ENCODE measurements at regions of chr15 and their contacts with region 1.

Region 1: DNA sequence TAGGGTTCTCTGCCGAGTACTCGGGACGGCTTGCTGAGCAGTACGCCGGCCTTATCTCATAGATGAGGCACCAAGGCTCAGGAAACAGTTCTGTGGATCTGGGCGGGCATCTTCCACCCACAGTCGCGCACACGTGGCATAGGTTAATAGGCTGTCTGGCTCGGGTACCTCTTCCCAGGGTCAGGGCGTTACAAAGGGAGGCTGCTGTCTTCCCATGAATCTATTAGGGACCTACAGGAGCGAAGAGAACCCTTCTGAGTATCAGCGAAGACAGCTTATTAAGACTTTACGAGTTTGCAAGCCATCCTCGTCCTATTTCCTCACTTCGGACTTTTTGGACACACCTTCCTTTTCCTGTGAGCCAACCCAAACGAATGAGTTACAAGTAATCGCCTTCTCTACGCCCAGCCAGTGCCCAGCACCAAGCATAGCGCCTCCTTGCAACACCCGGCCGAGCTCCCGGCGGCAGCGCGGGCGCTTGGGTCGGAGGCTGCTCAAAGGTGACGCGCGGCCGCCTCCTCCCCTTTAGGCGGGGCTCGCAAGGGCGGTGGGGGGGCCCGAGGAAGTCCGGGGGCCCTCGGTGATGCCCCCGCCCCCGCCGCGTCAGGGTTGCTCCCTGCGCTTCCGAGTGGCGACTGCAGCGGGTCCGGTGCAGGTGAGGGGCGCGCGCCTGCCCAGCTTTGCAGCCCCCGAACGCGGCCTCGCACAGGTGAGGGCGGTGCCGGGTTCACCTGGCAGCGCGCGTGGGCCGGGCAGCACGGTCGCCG is at the start of gene MCTP2:
- DNase-seq: peak; percentile 88
- ATAC-seq: peak; percentile 90
- total RNA-seq, gene MCTP2: 1.2 TPM

Region 2: GRCh38 chr15:93570527-93570926 is 660.6 kb before region 1 on chr15:
- intact Hi-C with region 1: loop called (anchors 10 kb)
- DNase-seq: no peak
- ATAC-seq: no peak

Region 3: DNA sequence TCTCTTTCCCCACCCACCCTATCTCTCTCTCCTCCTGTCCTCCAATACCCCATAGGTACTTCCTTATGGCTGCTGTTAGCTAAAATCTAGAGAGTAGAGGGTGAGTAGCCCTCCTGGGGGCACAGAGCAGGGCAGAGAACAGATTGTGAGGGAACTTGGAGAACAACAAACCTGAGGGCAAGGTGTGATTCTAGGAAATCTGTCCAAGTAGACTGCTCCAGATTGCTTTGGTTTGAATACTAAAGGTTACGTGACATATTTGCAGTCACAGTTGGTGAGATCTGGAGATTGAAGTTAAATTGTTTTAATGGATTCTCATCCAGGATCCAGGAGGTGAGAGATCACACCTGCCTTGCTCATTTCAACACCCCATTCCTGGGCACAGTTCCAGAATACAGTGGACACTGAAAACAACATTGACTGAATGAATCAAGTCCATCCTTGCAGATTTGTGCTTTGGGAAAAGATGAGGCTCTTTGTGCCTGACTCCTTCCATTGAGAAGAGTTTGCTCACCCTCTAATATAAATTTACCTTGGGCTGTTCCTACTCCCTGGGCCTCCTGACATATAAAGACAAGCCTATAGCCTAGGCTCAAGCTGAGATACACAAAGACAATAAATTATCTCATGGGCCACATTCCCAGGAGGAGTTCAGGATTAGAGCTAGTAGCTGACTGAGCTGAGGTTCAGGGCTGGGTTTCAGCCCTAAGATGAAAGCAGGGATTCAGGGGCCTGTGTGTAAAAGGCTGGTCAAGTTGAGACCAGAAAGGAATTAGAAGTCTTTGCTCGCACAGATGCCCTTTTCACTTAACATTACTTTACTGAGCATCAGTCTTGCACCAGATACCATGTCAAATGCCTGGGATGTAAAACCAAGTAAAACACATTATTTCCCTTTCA is 400.7 kb before region 1 on chr15:
- intact Hi-C with region 1: no loop called
- DNase-seq: no peak
- ATAC-seq: no peak

Region 4: DNA sequence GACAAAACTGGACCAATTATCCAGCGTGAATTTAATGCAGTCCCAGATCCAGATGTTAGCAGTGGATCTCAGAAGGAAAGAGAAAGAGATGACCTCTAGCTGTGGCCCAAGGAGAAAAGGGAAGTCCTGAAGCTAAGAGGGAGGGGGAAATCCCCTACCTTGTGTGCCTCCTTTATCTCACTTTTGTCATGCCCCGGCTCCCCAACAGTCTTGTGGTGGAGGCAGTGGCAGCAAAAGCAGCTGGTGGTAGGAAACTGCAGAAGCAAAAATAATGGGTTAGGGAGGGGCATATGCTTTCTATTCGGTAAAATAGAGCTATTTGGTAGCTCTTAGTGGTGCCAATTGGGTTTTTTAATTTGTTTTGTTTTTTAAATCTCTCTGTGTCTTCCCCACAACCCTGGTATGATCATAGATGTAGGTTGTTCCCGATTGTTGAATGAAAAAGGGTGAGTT is 56.7 kb after region 1 on chr15:
- intact Hi-C with region 1: loop called (anchors 10 kb)
- DNase-seq: no peak
- ATAC-seq: no peak

Measured in Right ventricle myocardium superior (tissue), 1 donor.